CD8-positive, alpha-beta memory T cell (primary cell): ENCODE measurements at regions of chr2 and their contacts with region 1.

Region 1: DNA sequence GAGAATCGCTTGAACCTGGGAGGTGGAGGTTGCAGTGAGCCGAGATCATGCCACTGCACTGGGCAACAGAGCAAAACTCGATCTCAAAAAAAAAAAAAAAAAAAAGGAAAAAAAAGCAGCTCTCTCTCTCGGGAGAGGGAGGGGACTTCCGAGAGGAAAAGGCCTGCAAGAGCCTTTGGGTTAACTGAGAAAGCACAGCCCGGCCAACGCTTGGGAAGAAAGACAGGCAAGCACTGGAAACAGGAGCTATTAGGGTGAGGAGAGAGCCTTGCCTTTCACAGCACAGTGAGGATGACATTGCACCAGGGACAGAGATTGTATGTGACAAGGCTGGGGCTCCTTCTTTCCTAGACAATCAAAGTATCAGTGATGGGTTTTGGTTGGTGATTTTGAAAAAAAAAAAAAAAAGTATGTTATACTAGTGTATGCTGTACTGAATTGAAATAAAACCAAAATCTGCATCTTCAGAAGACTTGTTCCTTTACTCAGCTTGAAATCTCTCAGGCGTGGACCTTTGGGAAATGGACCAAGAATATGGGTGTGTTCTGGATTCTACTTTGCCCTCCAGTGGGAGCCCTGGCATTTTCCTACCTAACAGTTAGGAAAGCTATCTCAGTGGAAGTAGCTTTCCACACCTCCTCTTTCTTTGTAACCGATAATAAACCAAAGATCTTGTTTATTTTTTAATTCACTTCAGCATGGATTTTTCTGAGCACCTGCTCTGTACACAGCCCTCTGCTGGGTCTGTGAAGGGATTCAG is 16.7 kb downstream of the SRSF7 start:
- DNase-seq: no peak
- H3K4me3 ChIP-seq: no peak overlapping the region
- H3K4me3 Mint-ChIP-seq: no peak overlapping the region
- H3K27ac ChIP-seq: no peak overlapping the region
- H3K27ac Mint-ChIP-seq: peak overlapping the region in 4 of 8 donors; percentile 7 to 74 (median 26)
- H3K4me1 ChIP-seq: no peaks in the 10 kb centered on the region
- H3K4me1 Mint-ChIP-seq: peaks cover 13 to 18% (median 14%) of the 10 kb centered on the region in 3 donors
- H3K27me3 ChIP-seq: no peaks in the 10 kb centered on the region
- H3K27me3 Mint-ChIP-seq: no peaks in the 10 kb centered on the region

Region 2: DNA sequence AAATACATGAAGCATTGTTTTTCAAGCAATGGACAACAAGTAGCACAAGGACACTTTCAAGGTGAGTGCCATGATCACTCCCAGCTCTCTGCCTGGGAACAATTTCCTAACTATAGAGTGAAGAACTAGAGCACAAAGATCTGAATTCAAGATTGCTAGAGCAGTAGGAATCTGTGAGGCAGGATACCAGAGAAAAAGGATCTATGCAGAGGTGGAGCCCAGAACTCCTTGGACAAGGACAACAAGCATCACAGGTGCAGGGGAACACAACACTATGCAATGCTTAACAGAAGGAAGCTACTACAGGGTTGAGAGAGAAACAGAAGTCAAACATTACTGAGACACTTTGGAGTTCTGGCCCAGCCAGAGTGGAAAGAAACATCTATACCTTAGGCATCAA is 382.1 kb before region 1 on chr2:
- CTCF ChIA-PET with region 1: no interaction called
- POLR2A ChIA-PET with region 1: no interaction called
- DNase-seq: no peak
- H3K4me3 ChIP-seq: no peak overlapping the region
- H3K4me3 Mint-ChIP-seq: peak overlapping the region in 2 of 7 donors; percentile 4 to 25
- H3K27ac ChIP-seq: no peak overlapping the region
- H3K27ac Mint-ChIP-seq: peak overlapping the region in 3 of 8 donors; percentile 5 to 56 (median 43)
- H3K4me1 ChIP-seq: peaks cover 17% of the 10 kb centered on the region
- H3K4me1 Mint-ChIP-seq: peaks cover 25 to 39% (median 36%) of the 10 kb centered on the region in 3 donors
- H3K27me3 ChIP-seq: no peaks in the 10 kb centered on the region
- H3K27me3 Mint-ChIP-seq: no peaks in the 10 kb centered on the region

Region 3: GRCh38 chr2:38720613-38721241 is 13.8 kb before region 1 on chr2:
- CTCF ChIA-PET with region 1: interaction called, 4 read pairs
- POLR2A ChIA-PET with region 1: interaction called, 10 read pairs
- DNase-seq: no peak
- H3K4me3 ChIP-seq: no peak overlapping the region
- H3K4me3 Mint-ChIP-seq: peak overlapping the region in 3 of 7 donors; percentile 4 to 12 (median 6)
- H3K27ac ChIP-seq: no peak overlapping the region
- H3K27ac Mint-ChIP-seq: peak overlapping the region; percentile 65 to 94 (median 84)
- H3K4me1 ChIP-seq: peaks cover 19% of the 10 kb centered on the region
- H3K4me1 Mint-ChIP-seq: peaks cover 42 to 64% (median 58%) of the 10 kb centered on the region in 3 donors
- H3K27me3 ChIP-seq: no peaks in the 10 kb centered on the region
- H3K27me3 Mint-ChIP-seq: no peaks in the 10 kb centered on the region

Region 4: GRCh38 chr2:38765149-38765548 is 30.7 kb after region 1 on chr2:
- CTCF ChIA-PET with region 1: no interaction called
- POLR2A ChIA-PET with region 1: no interaction called
- DNase-seq: no peak
- H3K4me3 ChIP-seq: no peak overlapping the region
- H3K4me3 Mint-ChIP-seq: no peak overlapping the region
- H3K27ac ChIP-seq: no peak overlapping the region
- H3K27ac Mint-ChIP-seq: no peak overlapping the region
- H3K4me1 ChIP-seq: no peaks in the 10 kb centered on the region
- H3K4me1 Mint-ChIP-seq: no peaks in the 10 kb centered on the region
- H3K27me3 ChIP-seq: no peaks in the 10 kb centered on the region
- H3K27me3 Mint-ChIP-seq: peaks cover 0 to 2% of the 10 kb centered on the region in 2 donors